ENCODE measurements at regions of chr9 and their contacts with region 1.

Region 1: GRCh38 chr9:123349691-123350480 is 6.1 kb upstream of the CRB2 start:
- DNase-seq: peak; percentile 61 to 63
- H3K4me3 ChIP-seq: no peak overlapping the region
- H3K27ac ChIP-seq: peak overlapping the region; percentile 64 to 86 (median 83)
- H3K4me1 ChIP-seq: peaks cover 31 to 58% of the 10 kb centered on the region in 2 donors
- H3K27me3 ChIP-seq: no peaks in the 10 kb centered on the region
- CTCF ChIP-seq: peak; percentile 81 to 98 (median 96)
- POLR2A ChIP-seq: no peak

Region 2: GRCh38 chr9:123081824-123082223 is 268.1 kb before region 1 on chr9:
- intact Hi-C with region 1: loop called (anchors 10 kb)
- DNase-seq: no peak
- H3K4me3 ChIP-seq: no peak overlapping the region
- H3K27ac ChIP-seq: peak overlapping the region in 2 of 3 donors; percentile 7 to 56
- H3K4me1 ChIP-seq: peaks cover 13 to 31% of the 10 kb centered on the region in 2 donors
- H3K27me3 ChIP-seq: no peaks in the 10 kb centered on the region
- CTCF ChIP-seq: peak; percentile 38 to 93 (median 59)
- POLR2A ChIP-seq: no peak

Region 3: DNA sequence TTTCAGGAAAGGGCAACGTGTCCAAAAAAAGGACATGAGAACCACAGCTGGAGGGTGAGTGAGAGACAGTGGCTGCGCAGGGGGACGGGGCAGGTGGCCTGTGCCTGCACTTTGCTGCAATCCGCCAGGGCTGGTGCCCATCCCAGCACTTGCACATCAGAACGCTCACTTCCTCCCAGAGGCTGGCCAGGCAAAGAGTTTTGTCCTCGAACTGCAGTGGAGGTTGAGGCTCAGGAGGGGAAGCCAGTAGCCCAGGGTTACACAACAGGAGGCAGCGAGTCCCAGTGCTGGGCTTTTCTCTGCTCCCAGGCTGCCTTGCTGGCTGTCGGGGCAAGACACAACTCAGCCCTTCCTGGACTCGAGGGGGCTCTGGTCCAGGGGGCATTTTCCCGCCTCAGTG is 39.2 kb after region 1 on chr9:
- intact Hi-C with region 1: loop called (anchors 5 kb)
- DNase-seq: no peak
- H3K4me3 ChIP-seq: no peak overlapping the region
- H3K27ac ChIP-seq: no peak overlapping the region
- H3K4me1 ChIP-seq: peaks cover 9 to 22% of the 10 kb centered on the region in 2 donors
- H3K27me3 ChIP-seq: no peaks in the 10 kb centered on the region
- CTCF ChIP-seq: no peak
- POLR2A ChIP-seq: no peak

Measured in thyroid gland (tissue), 4 donors.